ENCODE measurements at regions of chr5 and their contacts with region 1.

Region 1: GRCh38 chr5:149551200-149552037 is at the start of gene CSNK1A1:
- DNase-seq: peak; percentile 99
- H3K4me3 Mint-ChIP-seq: peak within 1 kb of the TSS; percentile 97
- H3K27ac Mint-ChIP-seq: peak within 1 kb of the TSS; percentile 99
- H3K4me1 Mint-ChIP-seq: peaks cover 32% of the 10 kb centered on the region
- H3K27me3 Mint-ChIP-seq: no peaks in the 10 kb centered on the region
- total RNA-seq, gene CSNK1A1: 183 to 188 TPM

Region 2: DNA sequence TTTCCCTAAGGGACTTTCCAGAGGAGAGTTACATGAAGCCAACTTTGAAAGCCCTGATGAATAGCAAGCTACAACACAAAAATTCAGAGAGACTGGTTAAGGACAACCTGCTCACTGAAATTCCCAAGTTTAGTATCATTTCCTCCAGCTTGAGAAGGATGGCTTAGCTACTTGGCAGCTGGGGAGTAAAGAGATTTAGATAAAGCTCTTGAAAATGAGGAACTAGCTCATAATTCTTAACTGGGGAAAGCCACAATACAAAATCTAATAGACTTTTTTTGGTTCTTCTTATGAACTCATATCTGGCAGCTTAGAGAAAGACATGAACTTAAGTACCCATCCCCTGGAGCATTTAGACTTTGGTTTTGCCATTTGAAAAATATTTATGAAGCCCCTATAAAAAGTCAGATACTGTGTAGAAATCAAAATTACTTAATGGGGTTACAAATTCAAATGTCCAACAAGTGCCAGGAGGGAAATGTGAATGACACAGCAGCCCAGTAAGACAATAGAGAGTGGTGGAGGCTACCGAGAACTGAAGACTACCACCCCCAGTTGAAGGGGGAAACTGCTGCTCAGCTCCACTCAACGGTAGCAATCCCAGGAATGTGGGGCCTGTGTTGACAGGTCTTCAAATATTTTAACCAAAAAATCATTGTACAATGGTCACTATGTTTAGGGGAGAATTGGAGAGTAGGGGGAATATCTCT is 804.4 kb before region 1 on chr5:
- CTCF ChIA-PET with region 1: no interaction called
- intact Hi-C with region 1: no loop called
- DNase-seq: no peak
- H3K4me3 Mint-ChIP-seq: no peak overlapping the region
- H3K27ac Mint-ChIP-seq: no peak overlapping the region
- H3K4me1 Mint-ChIP-seq: no peaks in the 10 kb centered on the region
- H3K27me3 Mint-ChIP-seq: peaks cover 7% of the 10 kb centered on the region

Region 3: GRCh38 chr5:149240354-149240998 is 310.9 kb before region 1 on chr5:
- CTCF ChIA-PET with region 1: no interaction called
- intact Hi-C with region 1: loop called (anchors 2 kb)
- DNase-seq: peak; percentile 95
- H3K4me3 Mint-ChIP-seq: peak overlapping the region; percentile 19
- H3K27ac Mint-ChIP-seq: peak overlapping the region; percentile 80
- H3K4me1 Mint-ChIP-seq: peaks cover 33% of the 10 kb centered on the region
- H3K27me3 Mint-ChIP-seq: no peaks in the 10 kb centered on the region

Region 4: GRCh38 chr5:149357370-149358293 is 193.8 kb before region 1 on chr5 and contains the start of gene PCYOX1L:
- CTCF ChIA-PET with region 1: interaction called, 4 read pairs
- intact Hi-C with region 1: loop called (anchors 1 kb)
- DNase-seq: peak; percentile 95
- H3K4me3 Mint-ChIP-seq: peak within 1 kb of the TSS; percentile 95
- H3K27ac Mint-ChIP-seq: peak within 1 kb of the TSS; percentile 90
- H3K4me1 Mint-ChIP-seq: peaks cover 61% of the 10 kb centered on the region
- H3K27me3 Mint-ChIP-seq: no peaks in the 10 kb centered on the region
- total RNA-seq, gene PCYOX1L: 19.9 to 21.0 TPM

Region 5: DNA sequence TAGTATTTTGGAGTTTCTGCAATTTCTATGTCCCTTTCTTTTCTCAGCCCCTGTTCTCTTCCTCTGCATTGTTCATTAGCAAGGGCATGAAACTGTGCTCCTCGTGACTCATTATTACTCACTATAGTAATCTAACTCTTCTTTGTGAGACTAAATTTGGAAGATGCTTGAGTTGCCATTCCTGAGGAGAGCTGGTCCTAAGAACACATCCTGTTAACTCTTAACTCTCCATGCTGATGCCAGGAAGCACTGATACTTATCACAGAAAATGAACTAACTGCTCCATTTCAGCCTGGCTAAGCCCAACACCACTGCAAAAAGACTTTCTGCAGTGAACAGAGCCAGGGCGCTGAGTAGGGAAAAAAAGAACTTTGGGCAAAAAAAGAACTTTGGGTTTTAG is 10.4 kb after region 1 on chr5:
- CTCF ChIA-PET with region 1: interaction called, 34 read pairs
- intact Hi-C with region 1: loop called (anchors 1 kb)
- DNase-seq: peak; percentile 20
- H3K4me3 Mint-ChIP-seq: no peak overlapping the region
- H3K27ac Mint-ChIP-seq: peak overlapping the region; percentile 70
- H3K4me1 Mint-ChIP-seq: peaks cover 32% of the 10 kb centered on the region
- H3K27me3 Mint-ChIP-seq: no peaks in the 10 kb centered on the region

Region 6: GRCh38 chr5:149731639-149732323 is 180.4 kb after region 1 on chr5:
- CTCF ChIA-PET with region 1: no interaction called
- intact Hi-C with region 1: loop called (anchors 1 kb)
- DNase-seq: peak; percentile 90
- H3K4me3 Mint-ChIP-seq: peak overlapping the region; percentile 81
- H3K27ac Mint-ChIP-seq: peak overlapping the region; percentile 56
- H3K4me1 Mint-ChIP-seq: peaks cover 4% of the 10 kb centered on the region
- H3K27me3 Mint-ChIP-seq: no peaks in the 10 kb centered on the region

Region 7: DNA sequence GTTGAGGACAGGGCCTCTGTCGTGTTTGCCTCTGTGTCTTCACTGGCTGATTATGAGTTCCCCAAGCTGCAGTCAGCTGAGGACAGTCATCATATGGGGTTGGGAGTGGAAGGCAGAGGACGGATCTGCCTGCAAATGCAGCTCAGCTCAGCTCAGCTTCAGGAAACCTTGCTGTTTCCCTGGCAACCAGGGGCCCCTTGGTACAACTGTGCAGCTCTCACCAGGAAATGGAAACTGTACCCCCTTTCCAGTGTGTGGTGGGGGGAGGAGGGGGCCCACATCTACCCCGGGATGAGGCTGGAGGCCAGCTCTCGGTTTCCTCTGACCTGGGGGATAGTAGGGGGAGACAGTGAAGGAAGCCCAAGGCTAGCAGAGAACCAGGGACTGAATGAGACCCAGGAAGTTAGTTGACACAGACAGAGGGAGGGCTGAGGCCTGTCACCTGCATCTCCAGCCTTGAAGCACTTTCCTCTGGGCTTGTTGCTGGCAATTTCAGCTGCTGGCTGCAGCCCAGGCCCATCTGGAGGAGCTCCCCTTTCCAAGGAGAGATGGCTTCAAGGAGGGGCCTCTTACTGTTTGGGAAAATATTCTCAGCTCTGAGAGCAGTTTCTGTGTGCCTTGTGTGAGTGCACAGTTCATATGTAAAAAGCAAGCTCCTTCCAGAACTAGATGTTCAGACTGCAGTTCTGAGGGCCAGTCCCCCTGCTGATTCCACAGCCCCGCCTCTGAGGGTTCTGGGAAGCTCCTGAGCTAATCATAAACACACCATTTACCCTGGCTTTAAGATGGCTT is 1599.2 kb after region 1 on chr5:
- CTCF ChIA-PET with region 1: no interaction called
- intact Hi-C with region 1: loop called (anchors 2 kb)
- DNase-seq: peak; percentile 91
- H3K4me3 Mint-ChIP-seq: peak overlapping the region; percentile 64
- H3K27ac Mint-ChIP-seq: peak overlapping the region; percentile 90
- H3K4me1 Mint-ChIP-seq: peaks cover 94% of the 10 kb centered on the region
- H3K27me3 Mint-ChIP-seq: no peaks in the 10 kb centered on the region

Measured in activated naive CD4-positive, alpha-beta T cell treated with anti-CD3 and anti-CD28 coated beads for 36 hours (primary cell).